ENCODE measurements at regions of chr7 and their contacts with region 1.

Region 1: GRCh38 chr7:29866490-29866930 is 60.2 kb downstream of the WIPF3 start:
- DNase-seq: peak; percentile 68 to 79 (median 75)
- H3K4me3 ChIP-seq: no peak overlapping the region
- H3K27ac ChIP-seq: peak overlapping the region; percentile 14 to 16
- H3K4me1 ChIP-seq: peaks cover 26% of the 10 kb centered on the region
- H3K27me3 ChIP-seq: no peaks in the 10 kb centered on the region
- CTCF ChIP-seq: no peak
- EP300 ChIP-seq: no peak
- POLR2A ChIP-seq: no peak

Region 2: GRCh38 chr7:29806208-29806994 is 60.1 kb before region 1 on chr7 and contains the start of gene WIPF3:
- intact Hi-C with region 1: loop called in 1 of 4 experiments (anchors 5 kb)
- DNase-seq: peak; percentile 58 to 80 (median 66)
- H3K4me3 ChIP-seq: peak within 1 kb of the TSS; percentile 58
- H3K27ac ChIP-seq: peak within 1 kb of the TSS; percentile 77 to 80
- H3K4me1 ChIP-seq: peaks cover 5% of the 10 kb centered on the region
- H3K27me3 ChIP-seq: no peaks in the 10 kb centered on the region
- CTCF ChIP-seq: peak in 1 of 3 donors; percentile 18
- EP300 ChIP-seq: no peak
- POLR2A ChIP-seq: peak; percentile 13
- total RNA-seq, gene WIPF3: 15.3 to 122 (median 49.8) TPM

Region 3: DNA sequence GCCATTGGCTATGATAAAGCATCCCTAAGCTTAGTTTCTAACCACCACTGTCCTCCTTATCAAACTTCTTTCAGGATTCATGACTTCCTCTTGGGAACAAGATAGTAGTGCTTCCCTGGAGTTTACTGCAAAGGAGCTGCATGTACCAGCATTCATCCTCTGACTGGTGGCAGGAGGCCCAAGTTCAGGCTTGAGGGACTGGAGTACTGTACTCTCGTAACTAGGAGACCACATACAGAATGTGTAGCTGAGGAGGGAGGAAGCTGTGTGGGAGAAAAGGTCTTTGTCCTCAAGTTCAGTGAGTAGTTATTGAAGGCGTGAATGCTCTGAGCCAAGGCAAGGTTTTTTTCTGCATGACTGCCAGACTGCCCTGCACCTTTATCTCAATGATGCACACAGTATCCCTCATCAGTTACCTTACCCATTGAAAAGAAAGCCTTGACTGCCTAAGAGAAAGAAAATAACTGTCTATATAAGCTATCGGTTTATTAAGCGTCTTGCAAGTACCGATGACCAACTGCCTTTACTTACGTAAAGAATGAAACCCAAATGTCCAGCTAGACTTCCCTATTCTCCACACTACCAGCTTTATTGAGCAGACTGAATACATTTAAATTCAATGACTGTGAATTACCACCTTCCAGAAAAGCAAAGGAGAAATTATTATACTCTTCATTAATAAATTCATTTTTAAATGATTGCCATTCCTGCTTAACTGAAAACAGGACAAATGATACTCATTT is 110.3 kb after region 1 on chr7:
- intact Hi-C with region 1: no loop called
- DNase-seq: peak; percentile 24 to 73 (median 29)
- H3K4me3 ChIP-seq: no peak overlapping the region
- H3K27ac ChIP-seq: no peak overlapping the region
- H3K4me1 ChIP-seq: peaks cover 2% of the 10 kb centered on the region
- H3K27me3 ChIP-seq: no peaks in the 10 kb centered on the region
- CTCF ChIP-seq: no peak
- EP300 ChIP-seq: no peak
- POLR2A ChIP-seq: no peak

Region 4: GRCh38 chr7:30134611-30135545 is 268.4 kb after region 1 on chr7 and contains the start of gene MTURN:
- intact Hi-C with region 1: no loop called
- DNase-seq: peak; percentile 83 to 92 (median 89)
- H3K4me3 ChIP-seq: peak within 1 kb of the TSS; percentile 78
- H3K27ac ChIP-seq: peak within 1 kb of the TSS; percentile 86 to 92
- H3K4me1 ChIP-seq: peaks cover 5% of the 10 kb centered on the region
- H3K27me3 ChIP-seq: no peaks in the 10 kb centered on the region
- CTCF ChIP-seq: peak in 2 of 3 donors; percentile 29 to 31
- EP300 ChIP-seq: no peak
- POLR2A ChIP-seq: no peak
- total RNA-seq, gene MTURN: 14.7 to 65.1 (median 40.4) TPM

Measured in ovary (tissue), 10 donors.